Aorta (tissue), 5 donors: ENCODE measurements at regions of chr3 and their contacts with region 1.

Region 1: DNA sequence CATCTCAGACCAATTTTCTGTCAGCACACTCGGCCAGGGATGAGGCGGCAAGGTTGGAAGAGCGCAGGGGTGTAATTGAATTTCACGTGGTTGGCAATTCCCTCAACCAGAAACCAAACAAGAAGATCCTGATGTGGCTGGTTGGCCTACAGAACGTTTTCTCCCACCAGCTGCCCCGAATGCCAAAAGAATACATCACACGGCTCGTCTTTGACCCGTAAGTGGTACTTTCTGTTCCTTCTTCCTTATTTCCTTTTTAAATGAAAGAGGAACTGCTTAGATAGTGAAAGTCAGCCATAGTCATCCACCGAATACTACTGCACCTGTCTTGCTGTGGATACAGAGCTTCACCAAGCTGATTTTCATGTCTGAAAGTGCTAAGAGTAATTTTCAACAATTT is 60.1 kb downstream of the SGO1 start:
- DNase-seq: peak in 1 of 2 donors; percentile 60
- ATAC-seq: peak; percentile 36
- H3K4me3 ChIP-seq: no peak overlapping the region
- H3K27ac ChIP-seq: no peak overlapping the region
- H3K4me1 ChIP-seq: no peaks in the 10 kb centered on the region
- H3K27me3 ChIP-seq: no peaks in the 10 kb centered on the region

Region 2: DNA sequence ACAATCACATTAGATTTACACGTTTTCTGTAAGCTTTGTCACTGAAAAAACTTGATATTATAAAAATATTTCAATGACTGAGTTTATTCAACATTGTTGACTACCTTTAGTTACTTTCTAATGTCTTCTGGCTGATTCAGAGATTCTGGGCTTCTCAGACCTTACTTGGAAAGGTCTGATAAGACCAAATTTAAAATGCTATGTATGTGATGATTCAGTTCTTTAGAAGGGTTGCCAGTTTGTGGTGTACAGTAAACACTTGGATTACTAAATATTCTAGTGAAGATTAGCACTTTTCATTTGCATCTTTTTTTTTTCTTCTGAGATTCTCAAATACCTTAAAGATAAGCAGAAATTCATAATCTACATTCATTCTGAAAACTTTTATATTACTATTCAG is 10.3 kb after region 1 on chr3:
- intact Hi-C with region 1: loop called in 1 of 2 experiments (anchors 1 kb)
- DNase-seq: no peak
- ATAC-seq: no peak
- H3K4me3 ChIP-seq: no peak overlapping the region
- H3K27ac ChIP-seq: no peak overlapping the region
- H3K4me1 ChIP-seq: no peaks in the 10 kb centered on the region
- H3K27me3 ChIP-seq: no peaks in the 10 kb centered on the region